Activated CD4-positive, alpha-beta memory T cell treated with anti-CD3 and anti-CD28 coated beads for 36 hours (primary cell): ENCODE measurements at regions of chr7 and their contacts with region 1.

Region 1: GRCh38 chr7:44885394-44886317 is at the start of gene PURB:
- DNase-seq: peak; percentile 98
- H3K4me3 Mint-ChIP-seq: peak within 1 kb of the TSS; percentile 91
- H3K27ac Mint-ChIP-seq: peak within 1 kb of the TSS; percentile 98
- H3K4me1 Mint-ChIP-seq: peaks cover 58% of the 10 kb centered on the region
- H3K27me3 Mint-ChIP-seq: no peaks in the 10 kb centered on the region
- total RNA-seq, gene PURB: 21.5 to 23.6 TPM

Region 2: DNA sequence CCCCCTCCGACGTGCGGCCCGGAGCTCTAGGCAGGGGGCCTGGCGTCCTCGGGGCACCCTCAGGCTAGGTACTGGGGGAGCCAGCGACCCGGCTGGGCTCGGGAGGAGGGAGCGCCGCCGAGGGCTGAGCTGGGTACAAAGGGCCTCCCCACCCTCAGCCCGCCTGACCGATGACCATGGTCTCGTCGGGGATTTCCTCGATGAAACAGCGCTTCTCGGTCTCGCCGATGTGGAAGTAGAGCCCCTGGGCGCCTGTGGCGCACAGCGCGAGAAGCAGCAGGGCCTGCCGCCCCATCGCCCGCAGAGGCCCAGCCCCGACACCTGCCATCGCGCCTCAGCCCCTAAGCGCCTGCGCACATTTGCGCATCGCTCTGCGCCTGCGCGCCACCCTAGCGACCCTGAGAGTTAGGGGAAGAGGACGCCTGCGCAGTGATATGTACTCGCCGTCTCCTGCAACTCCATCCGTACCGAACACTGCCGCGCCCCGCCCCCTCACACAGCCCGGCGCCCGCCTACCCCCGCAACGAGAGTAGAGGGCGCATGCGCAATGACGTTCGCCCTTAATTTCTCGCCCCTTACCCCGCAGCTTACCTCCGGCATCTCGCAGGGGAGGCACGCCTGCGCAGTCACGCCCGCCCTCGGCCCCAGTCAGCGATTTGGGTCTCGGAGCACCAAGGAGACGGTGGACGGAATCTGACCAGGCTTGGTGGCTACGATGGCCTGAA is 303.6 kb before region 1 on chr7 and contains the start of gene TMED4:
- CTCF ChIA-PET with region 1: no interaction called
- POLR2A ChIA-PET with region 1: interaction called, 10 read pairs
- intact Hi-C with region 1: loop called (anchors 2 kb)
- DNase-seq: peak; percentile 100
- H3K4me3 Mint-ChIP-seq: peak within 1 kb of the TSS; percentile 91
- H3K27ac Mint-ChIP-seq: peak within 1 kb of the TSS; percentile 91
- H3K4me1 Mint-ChIP-seq: peaks cover 29% of the 10 kb centered on the region
- H3K27me3 Mint-ChIP-seq: peaks cover 3% of the 10 kb centered on the region
- total RNA-seq, gene TMED4: 74.8 to 79.1 TPM

Region 3: DNA sequence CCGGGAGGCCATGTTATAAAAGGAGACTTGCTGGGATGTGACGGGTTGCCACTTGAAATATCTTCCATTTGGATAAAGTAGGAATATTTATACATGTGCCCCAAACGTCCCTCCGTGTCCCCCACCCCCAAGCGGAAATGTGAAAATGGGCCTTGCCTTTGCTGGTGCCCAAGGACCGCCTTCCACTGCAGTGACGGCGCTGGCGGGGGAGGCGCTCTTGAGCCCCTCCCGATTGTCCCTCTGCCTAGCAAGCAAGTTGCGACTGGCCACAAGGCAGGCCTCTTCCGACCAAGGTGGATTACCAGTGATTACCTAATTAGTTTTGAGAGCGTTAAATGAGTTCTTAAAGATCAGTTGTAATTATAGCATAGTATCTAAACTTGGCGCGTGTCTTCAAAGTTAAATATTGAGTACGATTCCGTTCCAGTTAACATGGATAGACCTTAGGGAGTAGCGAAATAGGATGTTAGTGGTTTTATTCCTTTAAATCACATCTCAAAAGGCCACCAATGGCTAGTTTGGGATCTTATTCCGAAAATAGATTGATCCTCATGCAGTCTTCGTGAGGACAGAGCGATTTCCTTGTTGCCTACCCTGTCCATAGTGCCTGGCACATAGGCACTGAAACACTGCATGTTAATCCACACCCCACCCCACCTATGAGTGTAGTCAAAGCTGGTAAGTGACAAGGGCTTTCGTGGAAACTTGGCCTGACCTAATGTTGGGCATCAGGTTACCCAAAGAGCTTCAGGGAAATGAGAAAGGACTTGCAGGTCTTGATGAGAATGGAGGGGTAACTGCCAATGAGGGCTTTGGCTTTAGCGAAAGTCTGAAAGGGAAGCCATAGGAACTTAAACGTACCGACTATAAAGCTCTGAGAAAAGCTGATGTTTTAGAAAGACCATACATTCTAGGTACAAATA is 88.1 kb before region 1 on chr7:
- CTCF ChIA-PET with region 1: interaction called, 3 read pairs
- POLR2A ChIA-PET with region 1: interaction called, 8 read pairs
- intact Hi-C with region 1: loop called (anchors 1 kb)
- DNase-seq: peak; percentile 91
- H3K4me3 Mint-ChIP-seq: peak overlapping the region; percentile 97
- H3K27ac Mint-ChIP-seq: peak overlapping the region; percentile 99
- H3K4me1 Mint-ChIP-seq: peaks cover 31% of the 10 kb centered on the region
- H3K27me3 Mint-ChIP-seq: no peaks in the 10 kb centered on the region

Region 4: DNA sequence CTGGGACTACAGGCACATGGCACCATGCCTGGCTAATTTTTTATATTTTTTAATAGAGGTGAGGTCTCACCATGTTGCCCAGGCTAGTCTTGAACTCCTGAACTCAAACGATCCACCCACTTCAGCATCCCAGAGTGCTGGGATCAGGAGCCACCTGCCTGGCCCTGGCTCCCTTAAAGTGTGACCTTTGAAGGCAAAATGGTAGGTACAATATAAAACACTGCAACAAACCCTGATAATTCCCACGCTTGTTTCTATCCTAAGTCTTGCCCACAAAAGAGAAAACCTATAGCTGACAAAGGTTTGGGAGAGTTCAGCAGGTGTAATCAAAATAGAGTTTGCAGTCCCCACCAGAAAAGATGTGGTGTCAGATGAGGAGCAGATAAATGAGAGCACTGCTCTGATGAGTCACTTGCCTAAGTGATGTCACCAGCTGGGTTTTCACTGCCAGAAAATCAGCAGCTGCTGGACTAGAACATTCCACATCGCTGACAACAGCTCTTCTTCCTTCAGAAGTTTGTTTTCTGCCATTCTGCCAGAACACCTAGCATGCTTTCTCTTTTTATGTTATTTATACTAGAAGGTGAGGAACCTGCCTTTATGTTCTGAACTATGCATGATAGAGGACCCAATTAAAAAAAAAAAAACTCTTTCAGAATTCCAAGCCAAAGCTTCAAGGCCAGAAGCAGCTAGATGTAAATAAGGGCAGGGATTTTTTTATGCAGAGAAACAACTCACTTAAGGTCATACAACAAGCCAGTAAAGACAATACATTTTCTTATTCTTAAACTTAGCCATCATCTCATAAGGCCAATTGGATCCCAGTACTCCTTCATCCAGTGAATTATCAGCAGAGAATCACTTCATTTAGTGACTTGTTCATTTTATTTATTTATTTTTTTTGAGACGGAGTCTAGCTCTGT is 18.3 kb before region 1 on chr7:
- CTCF ChIA-PET with region 1: interaction called, 8 read pairs
- POLR2A ChIA-PET with region 1: interaction called, 10 read pairs
- intact Hi-C with region 1: no loop called
- DNase-seq: peak; percentile 62
- H3K4me3 Mint-ChIP-seq: no peak overlapping the region
- H3K27ac Mint-ChIP-seq: peak overlapping the region; percentile 52
- H3K4me1 Mint-ChIP-seq: peaks cover 7% of the 10 kb centered on the region
- H3K27me3 Mint-ChIP-seq: no peaks in the 10 kb centered on the region

Region 5: GRCh38 chr7:44921607-44922359 is 36.1 kb after region 1 on chr7:
- CTCF ChIA-PET with region 1: interaction called, 5 read pairs
- POLR2A ChIA-PET with region 1: interaction called, 4 read pairs
- intact Hi-C with region 1: loop called (anchors 2 kb)
- DNase-seq: peak; percentile 97
- H3K4me3 Mint-ChIP-seq: no peak overlapping the region
- H3K27ac Mint-ChIP-seq: no peak overlapping the region
- H3K4me1 Mint-ChIP-seq: peaks cover 15% of the 10 kb centered on the region
- H3K27me3 Mint-ChIP-seq: no peaks in the 10 kb centered on the region

Region 6: DNA sequence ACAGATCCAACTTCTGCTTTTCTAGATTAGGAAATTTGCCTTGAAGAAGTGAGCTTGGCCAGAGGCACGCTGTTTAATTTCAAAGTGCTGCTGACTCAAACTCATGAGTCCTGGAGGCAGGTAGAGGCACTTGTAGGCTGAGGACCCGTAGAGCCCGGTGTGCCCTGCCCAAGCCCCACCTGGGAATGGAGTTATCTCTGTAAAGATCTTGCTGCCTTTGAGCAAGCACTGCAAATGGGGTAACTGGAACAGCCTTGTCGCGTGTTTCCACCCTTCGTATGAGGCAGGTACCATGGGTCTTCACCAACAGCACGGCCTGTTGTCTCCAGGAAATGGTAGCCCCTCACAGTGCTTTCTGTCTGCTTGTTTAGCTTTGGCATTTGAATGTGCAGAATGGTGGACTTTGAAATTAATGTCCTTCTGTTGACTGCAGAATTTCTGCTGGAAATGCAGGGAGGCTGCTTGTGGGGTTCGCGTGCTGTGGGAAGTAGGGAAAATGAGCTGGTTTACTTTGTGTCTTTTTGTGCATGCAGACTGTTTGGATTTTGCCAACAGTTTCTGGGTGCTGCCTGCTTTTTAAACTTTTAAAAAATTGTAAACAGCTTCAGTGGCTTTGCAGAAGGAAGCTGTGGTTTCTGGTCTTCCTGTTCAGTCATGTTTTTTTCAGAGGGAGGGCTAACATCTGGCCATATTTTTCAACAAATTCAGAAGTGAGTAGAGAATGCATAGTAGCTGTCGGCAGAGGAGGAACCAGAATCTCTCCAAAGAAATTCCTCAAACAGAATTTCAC is 141.5 kb after region 1 on chr7:
- CTCF ChIA-PET with region 1: no interaction called
- POLR2A ChIA-PET with region 1: no interaction called
- intact Hi-C with region 1: loop called (anchors 5 kb)
- DNase-seq: peak; percentile 30
- H3K4me3 Mint-ChIP-seq: peak overlapping the region; percentile 72
- H3K27ac Mint-ChIP-seq: peak overlapping the region; percentile 82
- H3K4me1 Mint-ChIP-seq: peaks cover 80% of the 10 kb centered on the region
- H3K27me3 Mint-ChIP-seq: no peaks in the 10 kb centered on the region